Activated naive CD4-positive, alpha-beta T cell treated with anti-CD3 and anti-CD28 coated beads for 36 hours (primary cell): ENCODE measurements at regions of chr17 and their contacts with region 1.

Region 1: DNA sequence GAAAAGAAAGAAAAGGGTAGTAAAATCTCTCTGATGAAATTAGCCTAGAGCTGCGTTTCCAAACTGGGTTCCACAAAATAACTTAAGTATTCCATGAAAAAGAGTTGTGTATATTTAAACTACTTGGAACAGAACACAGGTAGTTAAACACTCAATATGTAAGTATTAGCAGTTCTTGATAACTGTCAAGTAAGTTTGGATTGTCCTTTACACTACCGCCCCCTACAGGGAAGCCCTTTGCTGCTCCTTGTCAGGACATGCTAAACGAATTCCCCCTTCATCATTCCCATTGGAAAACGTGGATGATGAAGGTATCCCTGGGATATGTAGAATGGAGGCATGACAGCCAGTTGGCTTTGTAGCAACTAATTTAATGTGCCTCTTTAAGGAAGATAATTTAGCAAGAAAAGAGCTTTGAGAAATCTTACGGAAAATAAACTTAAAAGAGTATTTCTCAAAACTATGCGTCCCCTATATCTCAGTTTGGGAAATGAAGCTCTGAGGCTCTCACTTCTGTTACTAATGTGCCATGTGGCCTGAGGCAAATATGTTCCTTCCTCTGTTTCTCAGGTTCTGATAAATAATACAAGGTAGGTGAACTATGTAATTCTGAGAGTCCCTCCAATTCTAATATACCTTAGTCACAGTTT is 18.8 kb downstream of the NCBP3 start:
- DNase-seq: peak; percentile 89
- H3K4me3 Mint-ChIP-seq: no peak overlapping the region
- H3K27ac Mint-ChIP-seq: no peak overlapping the region
- H3K4me1 Mint-ChIP-seq: peaks cover 2% of the 10 kb centered on the region
- H3K27me3 Mint-ChIP-seq: no peaks in the 10 kb centered on the region

Region 2: DNA sequence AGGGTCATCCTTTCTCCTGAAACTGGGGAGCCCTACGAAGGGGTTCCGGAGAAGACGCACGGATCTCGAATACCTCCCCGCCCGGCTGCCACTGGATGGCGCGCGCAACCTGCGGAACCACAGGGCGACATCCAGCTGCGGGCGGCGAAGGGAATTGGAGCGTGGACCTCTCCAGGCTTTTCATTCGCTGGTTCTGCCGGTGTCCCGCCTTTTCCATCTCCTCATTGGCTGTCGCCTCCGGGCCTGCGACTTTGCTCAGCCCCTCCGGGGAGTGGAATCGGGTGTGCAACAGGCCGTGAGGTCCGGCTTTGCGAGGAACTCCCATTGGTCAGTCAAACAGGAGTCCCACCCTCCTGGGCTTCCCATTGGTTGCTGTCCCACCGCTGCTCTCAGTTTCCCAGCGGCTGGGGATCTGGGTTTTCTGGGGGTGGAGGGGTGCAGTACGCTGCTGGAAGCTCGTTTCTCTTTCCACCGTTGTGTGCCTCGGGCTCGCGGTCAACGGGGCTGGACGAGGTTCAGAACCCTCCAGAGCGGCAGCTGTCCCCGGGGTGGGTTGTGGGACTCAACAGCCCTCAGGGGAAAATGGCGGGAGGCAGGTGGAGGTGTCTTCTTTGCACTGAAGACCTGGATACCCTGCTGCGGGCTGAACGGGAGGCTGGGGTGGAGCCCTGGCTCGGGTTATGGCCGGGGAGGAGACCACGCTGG is 778.3 kb before region 1 on chr17:
- CTCF ChIA-PET with region 1: no interaction called
- intact Hi-C with region 1: loop called (anchors 5 kb)
- DNase-seq: peak; percentile 97
- H3K4me3 Mint-ChIP-seq: peak overlapping the region; percentile 91
- H3K27ac Mint-ChIP-seq: peak overlapping the region; percentile 87
- H3K4me1 Mint-ChIP-seq: peaks cover 10% of the 10 kb centered on the region
- H3K27me3 Mint-ChIP-seq: peaks cover 3% of the 10 kb centered on the region

Region 3: GRCh38 chr17:3683054-3683511 is 144.2 kb before region 1 on chr17:
- CTCF ChIA-PET with region 1: interaction called, 12 read pairs
- intact Hi-C with region 1: loop called (anchors 2 kb)
- DNase-seq: peak; percentile 72
- H3K4me3 Mint-ChIP-seq: no peak overlapping the region
- H3K27ac Mint-ChIP-seq: no peak overlapping the region
- H3K4me1 Mint-ChIP-seq: peaks cover 7% of the 10 kb centered on the region
- H3K27me3 Mint-ChIP-seq: no peaks in the 10 kb centered on the region